ENCODE measurements at regions of chr17 and their contacts with region 1.

Region 1: DNA sequence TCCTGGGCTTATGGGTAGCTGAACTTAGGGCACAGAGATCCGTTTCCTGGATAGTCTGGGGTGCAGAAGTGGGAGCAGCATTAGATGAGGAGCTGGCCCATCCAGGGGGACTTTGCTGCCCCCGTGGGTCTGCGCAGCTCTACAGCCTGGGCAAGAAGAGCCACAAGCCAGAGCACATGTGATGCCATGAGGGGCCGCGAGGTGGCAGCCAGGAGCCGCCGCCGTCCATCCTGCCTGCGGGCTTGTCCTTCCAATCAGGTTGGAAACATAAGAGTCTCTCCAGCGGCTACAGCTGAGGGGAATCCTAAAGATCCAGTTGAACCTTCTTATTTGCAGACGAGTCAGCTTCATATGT is 21.9 kb downstream of the C1QTNF1 start:
- DNase-seq: peak; percentile 75
- H3K4me3 Mint-ChIP-seq: no peak overlapping the region
- H3K27ac Mint-ChIP-seq: no peak overlapping the region
- H3K4me1 Mint-ChIP-seq: peaks cover 17% of the 10 kb centered on the region
- H3K27me3 Mint-ChIP-seq: peaks cover 30% of the 10 kb centered on the region
- CTCF ChIP-seq: peak; percentile 92

Region 2: GRCh38 chr17:79019632-79020584 is 25.9 kb before region 1 on chr17:
- CTCF ChIA-PET with region 1: interaction called, 14 read pairs
- POLR2A ChIA-PET with region 1: no interaction called
- intact Hi-C with region 1: loop called (anchors 1 kb)
- DNase-seq: peak; percentile 77
- H3K4me3 Mint-ChIP-seq: no peak overlapping the region
- H3K27ac Mint-ChIP-seq: peak overlapping the region; percentile 35
- H3K4me1 Mint-ChIP-seq: peaks cover 24% of the 10 kb centered on the region
- H3K27me3 Mint-ChIP-seq: no peaks in the 10 kb centered on the region
- CTCF ChIP-seq: peak; percentile 84

Region 3: GRCh38 chr17:79027925-79028813 is 17.6 kb before region 1 on chr17:
- CTCF ChIA-PET with region 1: interaction called, 29 read pairs
- POLR2A ChIA-PET with region 1: interaction called, 7 read pairs
- intact Hi-C with region 1: no loop called
- DNase-seq: peak; percentile 94
- H3K4me3 Mint-ChIP-seq: peak overlapping the region; percentile 38
- H3K27ac Mint-ChIP-seq: peak overlapping the region; percentile 95
- H3K4me1 Mint-ChIP-seq: peaks cover 53% of the 10 kb centered on the region
- H3K27me3 Mint-ChIP-seq: no peaks in the 10 kb centered on the region
- CTCF ChIP-seq: no peak

Region 4: DNA sequence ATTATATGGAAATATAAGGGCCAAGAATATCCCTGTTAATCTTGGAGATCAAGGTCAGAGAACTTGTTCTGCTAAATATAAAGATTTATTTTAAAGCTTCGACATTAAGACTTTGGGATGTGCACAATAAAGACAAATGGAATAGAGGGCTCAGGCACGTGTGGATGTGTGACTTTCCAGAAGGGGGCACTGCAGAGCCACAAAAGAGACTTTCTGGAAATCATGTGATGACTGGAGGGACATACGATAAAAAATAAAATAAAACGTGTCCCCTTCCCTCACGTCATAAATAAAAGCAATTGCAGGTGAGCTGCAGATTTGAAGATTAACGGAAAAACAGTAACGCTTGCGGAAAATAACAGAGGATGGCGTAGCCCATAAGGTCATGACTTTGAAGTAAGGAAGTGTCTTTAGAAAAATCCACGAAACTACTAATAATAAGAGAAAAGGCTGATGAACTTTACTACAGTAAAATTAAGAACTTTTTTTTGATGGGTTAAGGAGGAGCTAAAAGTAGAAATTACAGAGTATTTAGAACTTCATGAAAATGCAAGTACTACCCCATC is 19.4 kb after region 1 on chr17:
- CTCF ChIA-PET with region 1: interaction called, 10 read pairs
- POLR2A ChIA-PET with region 1: interaction called, 5 read pairs
- intact Hi-C with region 1: no loop called
- DNase-seq: peak; percentile 62
- H3K4me3 Mint-ChIP-seq: no peak overlapping the region
- H3K27ac Mint-ChIP-seq: no peak overlapping the region
- H3K4me1 Mint-ChIP-seq: no peaks in the 10 kb centered on the region
- H3K27me3 Mint-ChIP-seq: no peaks in the 10 kb centered on the region
- CTCF ChIP-seq: peak; percentile 32

Region 5: DNA sequence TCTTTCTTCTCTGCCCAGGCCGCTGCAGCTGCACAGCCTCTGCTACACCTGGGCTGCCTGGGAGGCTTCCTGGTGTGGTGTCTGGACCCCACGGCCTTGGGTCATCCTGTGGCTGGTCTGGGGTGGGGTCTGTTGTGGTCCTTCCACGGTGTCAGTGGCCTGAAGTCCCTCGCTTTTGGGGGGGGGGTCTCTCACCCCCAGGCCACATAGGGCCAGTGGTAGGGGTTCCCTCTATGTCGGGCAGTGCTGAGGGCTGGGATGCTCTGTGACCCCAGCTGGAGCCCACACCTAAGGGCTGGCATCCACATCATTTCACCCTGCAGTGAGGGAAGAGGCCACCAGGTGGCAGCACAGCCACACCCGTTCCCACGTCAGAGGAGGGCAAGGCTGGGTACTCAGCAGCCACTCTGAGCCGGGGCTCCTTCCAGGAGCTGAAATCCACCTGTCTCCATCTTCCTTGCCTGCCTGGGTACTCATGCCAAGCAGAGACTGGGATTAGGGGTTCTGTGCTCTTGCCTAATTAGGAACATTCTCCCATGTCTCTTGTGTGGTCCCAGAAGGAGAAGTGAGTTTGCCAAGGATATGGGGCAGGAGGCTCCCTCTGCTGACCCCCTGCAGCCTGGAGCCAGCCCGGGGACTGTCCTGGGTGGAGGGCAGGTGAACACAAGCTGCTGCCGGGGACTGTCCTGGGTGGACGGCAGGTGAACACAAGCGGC is 41.8 kb after region 1 on chr17:
- CTCF ChIA-PET with region 1: interaction called, 73 read pairs
- POLR2A ChIA-PET with region 1: interaction called, 3 read pairs
- intact Hi-C with region 1: loop called (anchors 1 kb)
- DNase-seq: peak; percentile 70
- H3K4me3 Mint-ChIP-seq: no peak overlapping the region
- H3K27ac Mint-ChIP-seq: no peak overlapping the region
- H3K4me1 Mint-ChIP-seq: no peaks in the 10 kb centered on the region
- H3K27me3 Mint-ChIP-seq: peaks cover 7% of the 10 kb centered on the region
- CTCF ChIP-seq: peak; percentile 74

Measured in MCF 10A (cell line).